RWPE1 (cell line): ENCODE measurements at regions of chr1 and their contacts with region 1.

Region 1: DNA sequence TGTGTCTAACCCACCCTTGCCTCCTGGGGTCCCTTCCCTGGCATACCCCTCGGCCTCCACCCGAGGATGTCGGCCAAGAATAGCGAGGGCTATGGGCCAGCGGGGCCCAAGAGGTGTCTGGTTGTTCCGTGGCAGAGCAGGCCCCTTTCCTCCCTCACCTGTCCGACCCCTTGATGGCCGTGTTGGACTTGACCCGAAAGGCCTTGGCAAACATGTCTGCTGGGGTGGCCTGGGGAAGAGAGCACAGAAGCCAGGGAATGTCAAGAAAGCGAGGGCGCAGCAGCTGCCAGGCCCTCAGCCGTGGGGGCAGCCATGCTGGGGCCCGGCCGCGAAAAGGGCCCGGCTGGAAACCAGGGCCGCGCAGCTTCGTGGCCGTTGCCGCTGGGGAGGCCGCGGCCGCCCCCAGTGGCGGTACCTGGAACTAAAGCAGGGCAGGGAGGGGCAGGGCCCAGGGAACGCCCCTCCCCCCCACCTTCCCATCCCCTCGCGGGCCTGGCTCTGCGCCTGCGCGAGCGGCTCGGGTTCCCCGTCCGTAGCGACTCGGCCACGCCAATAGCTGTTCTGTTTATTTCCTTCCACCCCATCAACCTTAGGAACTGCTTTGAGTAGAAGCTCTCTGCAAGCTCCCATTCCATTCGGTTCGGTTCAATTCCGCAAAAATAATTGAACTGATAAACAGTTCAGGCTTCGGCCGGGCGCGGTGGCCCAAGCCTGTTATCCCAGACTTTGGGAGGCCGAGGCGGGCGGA is at the start of gene EIF2D:
- DNase-seq: peak; percentile 100
- H3K27ac ChIP-seq: peak within 1 kb of the TSS; percentile 75
- CTCF ChIP-seq: peak; percentile 95

Region 2: DNA sequence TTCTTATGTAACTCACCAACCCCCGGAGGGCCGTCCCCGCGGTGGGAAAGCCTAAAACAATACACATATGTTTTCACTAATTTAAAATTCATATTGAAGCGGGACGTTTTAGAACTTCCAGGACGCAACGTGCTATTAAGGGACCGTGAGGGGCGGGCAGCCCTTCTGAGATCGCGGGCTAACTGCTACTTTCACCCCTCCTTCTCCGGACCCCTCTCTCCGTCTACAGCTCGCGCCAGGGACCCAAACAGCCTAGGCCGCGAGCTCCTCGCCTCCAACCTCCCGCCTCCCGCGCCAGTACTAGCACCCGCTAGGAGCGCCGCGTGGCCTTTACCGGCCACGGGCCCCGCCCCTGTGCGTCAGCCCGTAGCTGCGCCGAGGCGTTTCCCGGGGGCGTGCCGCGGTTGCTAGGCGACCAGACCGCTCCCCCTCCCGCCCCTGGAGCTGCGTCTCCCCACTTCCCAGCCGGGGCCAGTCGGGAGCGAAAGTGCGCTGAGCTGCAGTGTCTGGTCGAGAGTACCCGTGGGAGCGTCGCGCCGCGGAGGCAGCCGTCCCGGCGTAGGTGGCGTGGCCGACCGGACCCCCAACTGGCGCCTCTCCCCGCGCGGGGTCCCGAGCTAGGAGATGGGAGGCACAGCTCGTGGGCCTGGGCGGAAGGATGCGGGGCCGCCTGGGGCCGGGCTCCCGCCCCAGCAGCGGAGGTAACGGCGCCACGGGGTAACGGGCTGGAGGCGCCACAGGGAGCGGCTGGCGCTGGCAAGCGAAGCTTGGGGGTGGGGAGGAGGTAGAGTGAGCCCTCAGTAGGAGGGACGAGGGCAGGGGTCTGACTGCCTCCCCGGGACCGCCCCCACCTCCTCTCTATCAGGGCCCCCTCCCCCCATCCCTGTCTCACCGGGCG is 23.0 kb after region 1 on chr1 and contains the start of gene DYRK3:
- CTCF ChIA-PET with region 1: interaction called, 21 read pairs
- POLR2A ChIA-PET with region 1: interaction called, 5 read pairs
- DNase-seq: peak; percentile 99
- H3K27ac ChIP-seq: peak within 1 kb of the TSS; percentile 89
- CTCF ChIP-seq: no peak

Region 3: DNA sequence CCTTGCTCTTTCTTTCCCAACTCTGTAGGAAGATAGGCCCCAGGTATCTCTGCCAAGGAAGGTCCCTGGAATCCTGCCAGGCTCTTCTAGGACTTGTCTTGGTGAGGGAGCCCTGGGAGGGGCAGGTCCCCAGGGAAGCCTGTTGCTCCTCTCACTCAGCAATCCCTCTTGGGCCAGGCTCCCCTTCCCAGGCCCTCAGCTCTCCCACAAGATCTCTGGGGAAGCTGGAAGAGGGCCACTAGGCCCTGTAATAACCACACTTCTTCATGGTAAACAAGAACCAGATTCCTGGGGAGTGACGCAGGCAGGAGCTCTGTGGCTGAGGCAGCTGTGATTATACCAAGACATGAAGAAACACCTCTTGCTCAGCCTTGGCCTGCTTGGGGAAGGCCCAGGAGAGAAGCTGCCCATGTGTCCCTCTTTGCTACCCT is 62.5 kb after region 1 on chr1:
- CTCF ChIA-PET with region 1: interaction called, 10 read pairs
- POLR2A ChIA-PET with region 1: no interaction called
- DNase-seq: peak; percentile 95
- H3K27ac ChIP-seq: peak overlapping the region; percentile 84
- CTCF ChIP-seq: no peak

Region 4: GRCh38 chr1:206784471-206784903 is 172.2 kb after region 1 on chr1:
- CTCF ChIA-PET with region 1: no interaction called
- POLR2A ChIA-PET with region 1: no interaction called
- DNase-seq: no peak
- H3K27ac ChIP-seq: no peak overlapping the region
- CTCF ChIP-seq: no peak

Region 5: GRCh38 chr1:206982216-206982615 is 369.9 kb after region 1 on chr1:
- CTCF ChIA-PET with region 1: interaction called, 10 read pairs
- POLR2A ChIA-PET with region 1: no interaction called
- DNase-seq: peak; percentile 70
- H3K27ac ChIP-seq: no peak overlapping the region
- CTCF ChIP-seq: peak; percentile 73

Region 6: GRCh38 chr1:208025031-208025430 is 1412.7 kb after region 1 on chr1:
- CTCF ChIA-PET with region 1: no interaction called
- POLR2A ChIA-PET with region 1: interaction called, 10 read pairs
- DNase-seq: no peak
- H3K27ac ChIP-seq: no peak overlapping the region
- CTCF ChIP-seq: no peak